ENCODE measurements at regions of chr5 and their contacts with region 1.

Region 1: DNA sequence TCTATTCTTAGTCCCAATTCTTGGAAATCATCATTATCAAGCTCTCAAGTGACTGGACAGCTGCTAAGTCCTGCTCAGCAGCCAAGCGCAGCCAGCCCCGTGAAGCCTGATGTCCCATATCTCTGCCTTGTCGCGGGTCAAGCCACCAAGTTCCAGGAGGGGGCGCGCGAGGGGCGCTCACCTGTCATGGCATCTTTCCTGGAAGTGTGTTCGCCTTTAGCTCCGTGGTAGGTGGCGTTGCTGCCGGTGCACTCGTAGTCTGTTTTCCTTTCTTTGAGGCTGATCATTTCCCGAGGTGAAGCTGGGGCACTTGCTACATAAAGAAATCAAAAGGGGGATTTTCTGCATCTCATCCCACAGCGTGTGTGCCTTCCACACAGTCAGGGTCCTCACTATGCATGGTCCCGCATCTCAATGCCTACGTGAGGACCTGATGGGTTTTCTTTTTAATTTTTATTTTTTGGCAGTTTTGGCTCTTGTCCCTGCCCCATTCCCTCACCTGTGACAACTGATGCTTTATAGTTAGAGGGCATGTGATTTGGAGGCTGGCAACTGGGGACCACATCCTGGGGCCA is 227.0 kb upstream of the DAP start:
- DNase-seq: peak; percentile 87
- H3K4me3 Mint-ChIP-seq: peak overlapping the region; percentile 32
- H3K27ac Mint-ChIP-seq: peak overlapping the region; percentile 15
- H3K4me1 Mint-ChIP-seq: peaks cover 9% of the 10 kb centered on the region
- H3K27me3 Mint-ChIP-seq: peaks cover 22% of the 10 kb centered on the region

Region 2: DNA sequence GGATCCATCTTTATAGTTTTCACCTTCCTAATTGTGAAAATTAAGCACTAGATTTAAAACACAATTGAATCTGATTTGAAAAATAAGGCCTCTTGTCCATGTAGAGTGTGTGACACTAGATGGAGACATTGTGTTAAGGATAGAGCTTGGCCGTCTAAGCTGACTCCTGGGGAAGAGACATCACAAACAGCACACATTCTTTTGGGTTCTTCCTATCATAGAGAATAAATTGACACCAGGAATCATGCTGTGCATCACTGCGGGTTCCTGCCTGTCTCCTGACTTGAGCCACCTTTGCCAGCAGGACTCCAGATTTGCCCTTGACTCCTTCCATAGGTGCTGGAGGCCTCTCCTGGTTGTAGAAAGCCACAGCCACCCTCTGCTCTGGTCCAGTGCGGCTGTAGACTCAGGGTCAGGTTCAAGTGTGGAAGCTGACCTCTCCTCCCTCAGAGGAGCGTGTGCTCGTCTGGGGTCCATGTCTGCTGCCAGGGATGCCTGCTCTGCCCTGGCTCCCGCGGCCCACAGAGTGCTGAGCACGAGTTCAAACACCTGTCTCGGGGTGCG is 535.2 kb before region 1 on chr5:
- CTCF ChIA-PET with region 1: interaction called, 3 read pairs
- intact Hi-C with region 1: loop called (anchors 1 kb)
- DNase-seq: peak; percentile 22
- H3K4me3 Mint-ChIP-seq: no peak overlapping the region
- H3K27ac Mint-ChIP-seq: no peak overlapping the region
- H3K4me1 Mint-ChIP-seq: peaks cover 1% of the 10 kb centered on the region
- H3K27me3 Mint-ChIP-seq: no peaks in the 10 kb centered on the region

Region 3: GRCh38 chr5:11182441-11183268 is 194.6 kb after region 1 on chr5:
- CTCF ChIA-PET with region 1: interaction called, 8 read pairs
- intact Hi-C with region 1: loop called (anchors 1 kb)
- DNase-seq: no peak
- H3K4me3 Mint-ChIP-seq: no peak overlapping the region
- H3K27ac Mint-ChIP-seq: no peak overlapping the region
- H3K4me1 Mint-ChIP-seq: peaks cover 6% of the 10 kb centered on the region
- H3K27me3 Mint-ChIP-seq: peaks cover 2% of the 10 kb centered on the region

Region 4: GRCh38 chr5:11361768-11362167 is 373.8 kb after region 1 on chr5:
- CTCF ChIA-PET with region 1: no interaction called
- intact Hi-C with region 1: loop called (anchors 10 kb)
- DNase-seq: no peak
- H3K4me3 Mint-ChIP-seq: no peak overlapping the region
- H3K27ac Mint-ChIP-seq: no peak overlapping the region
- H3K4me1 Mint-ChIP-seq: no peaks in the 10 kb centered on the region
- H3K27me3 Mint-ChIP-seq: no peaks in the 10 kb centered on the region

Region 5: DNA sequence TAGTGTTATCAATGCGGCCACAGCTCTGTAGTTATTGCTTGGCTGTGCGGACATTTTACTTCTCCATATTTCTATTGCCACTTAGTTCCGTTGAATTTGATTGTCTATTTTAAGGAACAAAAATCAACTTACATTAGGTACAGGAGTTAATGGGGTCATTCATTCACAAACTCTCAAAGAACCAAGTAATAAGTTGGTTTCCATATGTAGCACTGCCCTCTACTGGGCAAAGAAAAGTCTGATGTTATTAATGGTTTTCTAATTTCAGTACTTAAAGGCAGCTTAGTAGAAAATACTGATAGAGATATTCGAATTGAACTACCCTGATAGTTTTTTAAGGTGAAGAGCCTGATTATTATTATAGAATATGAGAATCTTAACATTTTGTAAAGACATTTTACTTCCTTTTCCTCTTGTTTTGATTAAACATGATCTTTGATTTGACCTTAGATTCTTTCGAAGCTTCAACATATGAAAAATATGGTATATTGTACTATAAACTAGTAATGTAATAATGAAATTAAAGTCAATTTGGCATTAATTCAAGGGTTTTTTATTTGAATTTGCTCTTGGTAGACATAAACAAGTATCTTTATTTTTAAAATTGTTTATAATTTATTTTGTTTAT is 1035.7 kb after region 1 on chr5:
- CTCF ChIA-PET with region 1: no interaction called
- intact Hi-C with region 1: loop called (anchors 1 kb)
- DNase-seq: no peak
- H3K4me3 Mint-ChIP-seq: no peak overlapping the region
- H3K27ac Mint-ChIP-seq: no peak overlapping the region
- H3K4me1 Mint-ChIP-seq: no peaks in the 10 kb centered on the region
- H3K27me3 Mint-ChIP-seq: no peaks in the 10 kb centered on the region

Measured in activated naive CD4-positive, alpha-beta T cell treated with anti-CD3 and anti-CD28 coated beads for 36 hours (primary cell).